Activated B cell treated with CpG ODN at 0.5 μM for 24 hours (primary cell): ENCODE measurements at regions of chr1 and their contacts with region 1.

Region 1: DNA sequence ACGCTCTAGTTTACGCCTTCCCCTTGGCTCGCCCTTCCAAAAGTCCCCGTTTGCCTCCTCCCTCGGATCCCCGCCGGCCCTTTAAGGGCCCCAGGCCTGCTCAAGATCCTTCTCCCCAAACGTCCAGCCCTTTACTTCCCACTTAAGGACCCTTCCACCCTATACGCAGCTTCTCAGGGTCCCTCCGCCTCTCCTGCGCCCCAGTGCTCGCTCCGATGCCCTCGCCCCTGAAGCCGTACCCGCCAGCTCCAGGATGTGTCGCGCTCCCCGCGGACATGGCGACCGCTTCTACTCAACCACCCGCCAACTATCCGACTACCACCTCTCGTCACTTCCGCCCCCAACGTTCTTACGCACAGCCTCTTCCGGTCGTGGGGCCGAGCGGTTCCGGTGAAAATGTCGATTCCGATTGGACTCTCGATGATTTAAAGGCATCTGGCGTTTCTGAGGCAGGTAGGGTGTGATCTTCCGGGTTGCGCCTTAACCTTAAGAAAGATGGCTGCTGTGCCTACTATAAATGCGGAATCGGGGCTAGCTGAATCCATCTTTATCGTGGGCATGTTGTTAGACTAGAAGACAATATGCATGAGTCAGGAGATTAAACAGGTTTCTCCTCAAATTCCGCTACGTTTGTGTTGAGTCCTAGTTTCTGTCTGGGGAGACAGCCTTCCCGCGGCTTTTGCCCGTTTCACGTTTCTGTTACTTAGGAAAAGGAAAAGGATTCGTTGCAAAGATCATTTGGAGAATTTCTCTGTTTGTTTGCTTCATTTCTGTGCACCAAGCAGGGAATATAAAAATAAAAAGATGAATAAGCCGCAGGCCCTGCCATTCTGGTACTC is at the start of gene KHDC4:
- DNase-seq: peak; percentile 85
- ATAC-seq: peak; percentile 93
- H3K4me3 Mint-ChIP-seq: no peak within 1 kb of the TSS
- H3K27ac Mint-ChIP-seq: no peak within 1 kb of the TSS
- H3K4me1 Mint-ChIP-seq: peaks cover 41% of the 10 kb centered on the region
- H3K27me3 Mint-ChIP-seq: no peaks in the 10 kb centered on the region
- CTCF ChIP-seq: no peak
- total RNA-seq, gene KHDC4: 88.3 and 105 TPM in 2 replicates

Region 2: GRCh38 chr1:155776404-155776803 is 157.9 kb before region 1 on chr1:
- CTCF ChIA-PET with region 1: no interaction called
- POLR2A ChIA-PET with region 1: no interaction called
- intact Hi-C with region 1: no loop called
- DNase-seq: no peak
- ATAC-seq: no peak
- H3K4me3 Mint-ChIP-seq: no peak overlapping the region
- H3K27ac Mint-ChIP-seq: no peak overlapping the region
- H3K4me1 Mint-ChIP-seq: no peaks in the 10 kb centered on the region
- H3K27me3 Mint-ChIP-seq: no peaks in the 10 kb centered on the region
- CTCF ChIP-seq: no peak

Region 3: DNA sequence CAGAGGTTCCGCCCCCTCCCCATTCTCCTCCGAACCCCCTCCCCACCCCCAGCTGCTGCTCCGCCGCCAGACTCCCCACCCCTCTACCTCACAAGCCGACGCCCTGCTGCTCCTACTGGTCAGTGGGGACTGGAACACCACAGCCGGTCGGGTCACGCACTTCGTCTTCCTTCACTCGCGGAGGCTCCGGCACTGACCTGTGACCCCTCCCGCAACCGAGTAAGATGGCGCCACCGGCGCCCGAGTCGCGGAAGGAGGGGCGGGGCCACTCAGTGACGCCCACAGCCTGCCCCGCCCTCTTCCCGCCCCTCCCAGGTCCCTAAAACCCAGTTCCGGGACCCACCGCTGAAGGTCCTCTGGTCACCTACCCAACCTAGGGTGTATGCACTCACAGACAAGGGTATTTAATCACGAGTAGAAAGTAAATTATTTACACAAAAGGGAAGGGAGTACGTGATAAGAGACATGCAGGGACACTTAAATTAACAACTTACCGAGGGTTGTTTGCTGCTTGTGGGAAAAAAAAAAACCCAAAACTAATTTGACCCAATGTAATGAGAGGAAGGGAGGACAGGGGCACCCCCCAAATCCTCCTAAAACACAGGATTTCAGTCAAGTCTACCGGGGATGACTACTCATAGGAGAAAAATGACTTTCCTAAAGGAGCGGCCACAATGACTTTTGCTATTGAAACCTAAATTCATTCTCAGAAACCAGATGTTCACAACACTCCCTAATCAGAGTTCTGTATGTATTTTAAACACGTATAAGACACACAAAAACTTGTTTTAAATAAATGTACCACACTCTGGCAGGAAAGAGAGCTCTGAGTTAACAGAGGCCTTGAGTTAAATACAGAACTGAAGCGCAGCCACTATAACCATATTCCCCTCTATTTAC is 22.9 kb before region 1 on chr1 and contains the start of gene RIT1:
- CTCF ChIA-PET with region 1: no interaction called
- POLR2A ChIA-PET with region 1: interaction called, 17 read pairs
- intact Hi-C with region 1: loop called (anchors 1 kb)
- DNase-seq: peak; percentile 74
- ATAC-seq: peak; percentile 97
- H3K4me3 Mint-ChIP-seq: peak within 1 kb of the TSS; percentile 99
- H3K27ac Mint-ChIP-seq: peak within 1 kb of the TSS; percentile 97
- H3K4me1 Mint-ChIP-seq: peaks cover 22% of the 10 kb centered on the region
- H3K27me3 Mint-ChIP-seq: no peaks in the 10 kb centered on the region
- CTCF ChIP-seq: no peak
- total RNA-seq, gene RIT1: 32.7 and 38.6 TPM in 2 replicates

Region 4: GRCh38 chr1:155961937-155962336 is 27.6 kb after region 1 on chr1:
- CTCF ChIA-PET with region 1: interaction called, 18 read pairs
- POLR2A ChIA-PET with region 1: interaction called, 15 read pairs
- intact Hi-C with region 1: no loop called
- DNase-seq: no peak
- ATAC-seq: peak; percentile 53
- H3K4me3 Mint-ChIP-seq: peak overlapping the region; percentile 41
- H3K27ac Mint-ChIP-seq: peak overlapping the region; percentile 85
- H3K4me1 Mint-ChIP-seq: peaks cover 67% of the 10 kb centered on the region
- H3K27me3 Mint-ChIP-seq: no peaks in the 10 kb centered on the region
- CTCF ChIP-seq: no peak

Region 5: GRCh38 chr1:155978325-155978972 is 44.1 kb after region 1 on chr1 and contains the start of gene ARHGEF2:
- CTCF ChIA-PET with region 1: interaction called, 146 read pairs
- POLR2A ChIA-PET with region 1: interaction called, 403 read pairs
- intact Hi-C with region 1: loop called (anchors 1 kb)
- DNase-seq: peak; percentile 80
- ATAC-seq: peak; percentile 75
- H3K4me3 Mint-ChIP-seq: peak within 1 kb of the TSS; percentile 97
- H3K27ac Mint-ChIP-seq: peak within 1 kb of the TSS; percentile 90
- H3K4me1 Mint-ChIP-seq: peaks cover 85% of the 10 kb centered on the region
- H3K27me3 Mint-ChIP-seq: no peaks in the 10 kb centered on the region
- CTCF ChIP-seq: no peak
- total RNA-seq, gene ARHGEF2: 188 and 207 TPM in 2 replicates

Region 6: GRCh38 chr1:156065871-156066270 is 131.6 kb after region 1 on chr1:
- CTCF ChIA-PET with region 1: interaction called, 9 read pairs
- POLR2A ChIA-PET with region 1: interaction called, 3 read pairs
- intact Hi-C with region 1: loop called (anchors 1 kb)
- DNase-seq: no peak
- ATAC-seq: no peak
- H3K4me3 Mint-ChIP-seq: no peak overlapping the region
- H3K27ac Mint-ChIP-seq: no peak overlapping the region
- H3K4me1 Mint-ChIP-seq: no peaks in the 10 kb centered on the region
- H3K27me3 Mint-ChIP-seq: no peaks in the 10 kb centered on the region
- CTCF ChIP-seq: no peak